ENCODE measurements at regions of chr2 and their contacts with region 1.

Region 1: GRCh38 chr2:72859831-72860262 is 27.4 kb upstream of the SPR start:
- DNase-seq: peak; percentile 60
- H3K4me3 ChIP-seq: no peak overlapping the region
- H3K27ac ChIP-seq: no peak overlapping the region
- H3K4me1 ChIP-seq: no peaks in the 10 kb centered on the region
- CTCF ChIP-seq: peak; percentile 80

Region 2: DNA sequence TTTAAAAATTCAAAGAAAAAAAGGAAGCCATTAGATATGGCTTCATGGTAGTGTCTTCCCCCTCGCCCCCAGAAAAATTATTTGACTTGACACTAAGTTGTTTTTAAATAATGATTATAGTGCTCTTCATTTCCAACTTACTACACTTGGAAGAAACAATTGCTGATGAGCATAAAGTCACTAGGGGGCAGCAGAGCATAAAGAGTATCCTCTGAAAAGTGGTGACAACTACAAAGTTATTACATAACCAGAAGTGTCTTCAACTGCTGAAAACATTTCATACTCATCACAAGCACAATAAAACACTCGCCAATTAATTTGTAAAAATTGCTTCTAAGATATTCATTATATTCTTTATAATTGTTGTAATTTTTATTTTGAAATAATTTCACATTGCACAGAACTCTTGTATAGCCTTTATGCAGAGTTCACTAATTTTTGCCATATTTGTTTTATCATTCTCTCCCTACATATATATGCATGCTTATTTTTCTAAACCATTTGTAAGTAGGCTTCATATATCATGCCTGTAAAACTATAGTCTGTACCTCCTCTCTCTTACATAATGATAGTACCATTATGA is 88.9 kb before region 1 on chr2:
- CTCF ChIA-PET with region 1: no interaction called
- POLR2A ChIA-PET with region 1: no interaction called
- intact Hi-C with region 1: loop called (anchors 1 kb)
- DNase-seq: peak; percentile 61
- H3K4me3 ChIP-seq: no peak overlapping the region
- H3K27ac ChIP-seq: no peak overlapping the region
- H3K4me1 ChIP-seq: no peaks in the 10 kb centered on the region
- CTCF ChIP-seq: peak; percentile 94

Measured in OCI-LY7 (cell line).